MCF 10A (cell line): ENCODE measurements at regions of chr19 and their contacts with region 1.

Region 1: DNA sequence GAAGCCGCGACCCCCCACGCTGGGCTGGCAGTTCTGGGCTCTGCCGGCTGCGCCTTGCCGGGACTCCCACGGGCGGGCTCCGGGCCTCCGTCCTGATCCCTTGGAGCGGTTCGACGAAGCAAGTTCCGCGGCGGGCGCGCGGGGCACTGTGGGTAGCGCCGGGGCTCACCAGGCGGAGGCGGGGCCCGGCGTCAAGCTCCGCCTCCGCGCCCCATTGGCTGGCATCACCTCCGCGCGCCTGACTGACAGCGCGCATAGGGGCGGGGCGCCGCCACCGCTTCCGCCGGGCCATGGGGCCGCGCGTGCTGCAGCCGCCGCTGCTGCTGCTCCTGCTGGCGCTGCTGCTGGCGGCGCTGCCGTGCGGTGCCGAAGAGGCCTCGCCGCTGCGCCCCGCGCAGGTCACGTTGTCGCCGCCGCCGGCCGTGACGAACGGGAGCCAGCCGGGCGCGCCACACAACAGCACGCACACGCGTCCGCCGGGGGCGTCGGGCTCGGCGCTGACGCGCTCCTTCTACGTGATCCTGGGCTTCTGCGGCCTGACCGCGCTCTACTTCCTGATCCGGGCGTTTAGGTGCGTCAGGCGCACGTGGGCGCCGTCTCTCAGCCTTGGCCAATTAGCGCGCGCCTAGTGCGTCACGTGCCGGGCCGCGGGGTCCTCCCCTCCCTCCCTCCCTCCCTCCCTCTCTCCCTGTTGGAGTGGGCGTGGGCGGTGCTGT is at the start of gene FAM174C:
- DNase-seq: peak; percentile 98
- H3K4me3 Mint-ChIP-seq: peak within 1 kb of the TSS; percentile 77
- H3K27ac Mint-ChIP-seq: peak within 1 kb of the TSS; percentile 88
- H3K4me1 Mint-ChIP-seq: peaks cover 19% of the 10 kb centered on the region
- H3K27me3 Mint-ChIP-seq: no peaks in the 10 kb centered on the region
- CTCF ChIP-seq: no peak
- total RNA-seq, gene FAM174C: 71.0 and 85.2 TPM in 2 replicates

Region 2: GRCh38 chr19:940591-941291 is 334.7 kb before region 1 on chr19:
- CTCF ChIA-PET with region 1: no interaction called
- POLR2A ChIA-PET with region 1: no interaction called
- intact Hi-C with region 1: no loop called
- DNase-seq: peak; percentile 85
- H3K4me3 Mint-ChIP-seq: peak overlapping the region; percentile 66
- H3K27ac Mint-ChIP-seq: no peak overlapping the region
- H3K4me1 Mint-ChIP-seq: peaks cover 23% of the 10 kb centered on the region
- H3K27me3 Mint-ChIP-seq: no peaks in the 10 kb centered on the region
- CTCF ChIP-seq: no peak

Region 3: GRCh38 chr19:1241417-1242095 is 33.9 kb before region 1 on chr19 and contains the start of gene ATP5F1D:
- CTCF ChIA-PET with region 1: interaction called, 20 read pairs
- POLR2A ChIA-PET with region 1: interaction called, 18 read pairs
- intact Hi-C with region 1: no loop called
- DNase-seq: peak; percentile 93
- H3K4me3 Mint-ChIP-seq: peak within 1 kb of the TSS; percentile 71
- H3K27ac Mint-ChIP-seq: peak within 1 kb of the TSS; percentile 75
- H3K4me1 Mint-ChIP-seq: peaks cover 10% of the 10 kb centered on the region
- H3K27me3 Mint-ChIP-seq: no peaks in the 10 kb centered on the region
- CTCF ChIP-seq: no peak
- total RNA-seq, gene ATP5F1D: 256 and 258 TPM in 2 replicates

Region 4: DNA sequence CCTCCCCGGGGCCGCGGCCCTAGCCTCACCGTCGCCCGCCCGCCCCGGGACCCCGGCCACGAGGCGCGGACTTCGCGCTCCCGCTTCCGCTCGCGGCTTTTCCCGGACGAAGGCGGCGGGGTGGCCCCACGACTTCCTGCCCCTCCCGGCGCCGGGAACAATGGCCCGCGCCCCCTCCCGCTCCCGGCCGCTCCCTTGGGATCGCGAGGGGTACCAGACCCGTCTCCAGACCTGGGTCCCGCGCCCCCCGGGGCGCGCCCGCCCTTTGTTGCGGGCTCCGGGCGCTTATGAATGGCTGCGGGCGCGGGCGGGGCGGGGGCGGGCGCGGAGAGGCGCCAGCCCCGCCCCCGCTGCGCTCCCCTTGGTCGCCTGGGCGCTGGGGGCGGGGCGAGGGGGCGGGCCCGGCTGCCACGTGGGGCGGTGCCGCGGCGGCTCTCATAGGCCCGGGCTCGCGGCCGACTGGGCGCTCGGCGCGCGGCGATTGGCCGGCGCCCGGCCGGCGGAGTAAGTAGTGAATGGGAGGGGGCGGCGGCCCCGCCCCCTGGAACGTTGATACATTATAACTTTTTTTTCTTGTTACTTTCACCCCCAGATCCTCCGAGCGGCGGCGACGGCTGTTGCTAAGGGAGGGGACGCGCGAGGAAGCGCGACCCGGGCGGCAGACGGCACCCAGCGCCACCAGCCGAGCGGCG is 26.0 kb before region 1 on chr19:
- CTCF ChIA-PET with region 1: interaction called, 20 read pairs
- POLR2A ChIA-PET with region 1: interaction called, 20 read pairs
- intact Hi-C with region 1: no loop called
- DNase-seq: peak; percentile 97
- H3K4me3 Mint-ChIP-seq: peak overlapping the region; percentile 86
- H3K27ac Mint-ChIP-seq: no peak overlapping the region
- H3K4me1 Mint-ChIP-seq: peaks cover 9% of the 10 kb centered on the region
- H3K27me3 Mint-ChIP-seq: no peaks in the 10 kb centered on the region
- CTCF ChIP-seq: no peak

Region 5: GRCh38 chr19:1287354-1288225 is 12.2 kb after region 1 on chr19:
- CTCF ChIA-PET with region 1: no interaction called
- POLR2A ChIA-PET with region 1: no interaction called
- intact Hi-C with region 1: no loop called
- DNase-seq: no peak
- H3K4me3 Mint-ChIP-seq: no peak overlapping the region
- H3K27ac Mint-ChIP-seq: no peak overlapping the region
- H3K4me1 Mint-ChIP-seq: peaks cover 4% of the 10 kb centered on the region
- H3K27me3 Mint-ChIP-seq: peaks cover 34% of the 10 kb centered on the region
- CTCF ChIP-seq: no peak

Region 6: GRCh38 chr19:1360818-1361461 is 85.5 kb after region 1 on chr19:
- CTCF ChIA-PET with region 1: interaction called, 5 read pairs
- POLR2A ChIA-PET with region 1: interaction called, 4 read pairs
- intact Hi-C with region 1: loop called (anchors 5 kb)
- DNase-seq: peak; percentile 60
- H3K4me3 Mint-ChIP-seq: peak overlapping the region; percentile 23
- H3K27ac Mint-ChIP-seq: no peak overlapping the region
- H3K4me1 Mint-ChIP-seq: peaks cover 13% of the 10 kb centered on the region
- H3K27me3 Mint-ChIP-seq: no peaks in the 10 kb centered on the region
- CTCF ChIP-seq: no peak

Region 7: DNA sequence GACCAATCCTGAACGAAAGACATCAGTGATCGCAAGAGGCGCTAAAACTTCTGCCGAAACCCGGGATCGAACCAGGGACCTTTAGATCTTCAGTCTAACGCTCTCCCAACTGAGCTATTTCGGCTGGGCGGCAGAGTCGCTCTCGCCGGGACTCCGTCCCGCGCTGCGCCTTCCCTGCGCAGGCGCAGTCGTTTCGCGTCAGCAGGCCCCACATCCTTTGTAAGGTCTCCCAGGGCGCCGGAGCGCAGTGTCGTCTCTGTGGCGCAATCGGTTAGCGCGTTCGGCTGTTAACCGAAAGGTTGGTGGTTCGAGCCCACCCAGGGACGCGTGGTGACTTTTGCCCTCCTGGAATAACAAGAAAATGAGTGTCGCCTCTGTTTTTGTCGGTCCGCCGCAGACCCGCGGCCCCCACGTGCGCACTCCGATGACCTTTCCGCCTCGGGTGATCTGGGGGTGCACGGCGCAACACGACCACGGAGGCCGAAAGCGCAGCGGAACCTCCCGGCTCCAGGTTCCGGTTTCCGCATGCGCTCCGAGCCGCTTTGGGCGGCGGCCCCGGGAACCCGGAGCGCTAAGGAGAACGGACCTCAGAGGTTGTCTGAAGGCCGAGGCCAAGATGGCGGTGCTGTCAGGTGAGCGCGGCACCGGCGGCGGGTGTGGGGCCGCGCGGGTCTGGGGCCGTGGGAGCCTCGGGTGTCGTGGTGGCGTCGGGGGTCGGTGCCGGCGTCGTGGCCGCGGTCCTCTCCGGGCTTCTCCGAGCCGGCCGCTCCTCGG is 108.1 kb after region 1 on chr19 and contains the start of gene NDUFS7:
- CTCF ChIA-PET with region 1: interaction called, 5 read pairs
- POLR2A ChIA-PET with region 1: interaction called, 5 read pairs
- intact Hi-C with region 1: loop called (anchors 10 kb)
- DNase-seq: peak; percentile 85
- H3K4me3 Mint-ChIP-seq: peak within 1 kb of the TSS; percentile 82
- H3K27ac Mint-ChIP-seq: peak within 1 kb of the TSS; percentile 93
- H3K4me1 Mint-ChIP-seq: peaks cover 6% of the 10 kb centered on the region
- H3K27me3 Mint-ChIP-seq: no peaks in the 10 kb centered on the region
- CTCF ChIP-seq: no peak
- total RNA-seq, gene NDUFS7: 135 and 137 TPM in 2 replicates

Region 8: GRCh38 chr19:1438035-1438932 is 162.9 kb after region 1 on chr19 and contains the start of gene RPS15:
- CTCF ChIA-PET with region 1: interaction called, 3 read pairs
- POLR2A ChIA-PET with region 1: interaction called, 3 read pairs
- intact Hi-C with region 1: loop called (anchors 2 kb)
- DNase-seq: peak; percentile 92
- H3K4me3 Mint-ChIP-seq: peak within 1 kb of the TSS; percentile 98
- H3K27ac Mint-ChIP-seq: peak within 1 kb of the TSS; percentile 100
- H3K4me1 Mint-ChIP-seq: peaks cover 6% of the 10 kb centered on the region
- H3K27me3 Mint-ChIP-seq: no peaks in the 10 kb centered on the region
- CTCF ChIP-seq: peak; percentile 87
- total RNA-seq, gene RPS15: 1,168 and 1,243 TPM in 2 replicates

Region 9: GRCh38 chr19:1513499-1514294 is 238.3 kb after region 1 on chr19:
- CTCF ChIA-PET with region 1: interaction called, 3 read pairs
- POLR2A ChIA-PET with region 1: no interaction called
- intact Hi-C with region 1: loop called (anchors 5 kb)
- DNase-seq: peak; percentile 62
- H3K4me3 Mint-ChIP-seq: peak overlapping the region; percentile 75
- H3K27ac Mint-ChIP-seq: no peak overlapping the region
- H3K4me1 Mint-ChIP-seq: peaks cover 5% of the 10 kb centered on the region
- H3K27me3 Mint-ChIP-seq: no peaks in the 10 kb centered on the region
- CTCF ChIP-seq: peak; percentile 76